PC-3 (cell line): ENCODE measurements at regions of chr14 and their contacts with region 1.

Region 1: GRCh38 chr14:51304941-51305340 is 64.9 kb downstream of the TMX1 start:
- DNase-seq: peak; percentile 95
- ATAC-seq: peak; percentile 97
- H3K4me3 ChIP-seq: no peak overlapping the region
- H3K27ac ChIP-seq: peak overlapping the region; percentile 42
- H3K4me1 ChIP-seq: peaks cover 31% of the 10 kb centered on the region
- H3K27me3 ChIP-seq: no peaks in the 10 kb centered on the region
- CTCF ChIP-seq: no peak

Region 2: DNA sequence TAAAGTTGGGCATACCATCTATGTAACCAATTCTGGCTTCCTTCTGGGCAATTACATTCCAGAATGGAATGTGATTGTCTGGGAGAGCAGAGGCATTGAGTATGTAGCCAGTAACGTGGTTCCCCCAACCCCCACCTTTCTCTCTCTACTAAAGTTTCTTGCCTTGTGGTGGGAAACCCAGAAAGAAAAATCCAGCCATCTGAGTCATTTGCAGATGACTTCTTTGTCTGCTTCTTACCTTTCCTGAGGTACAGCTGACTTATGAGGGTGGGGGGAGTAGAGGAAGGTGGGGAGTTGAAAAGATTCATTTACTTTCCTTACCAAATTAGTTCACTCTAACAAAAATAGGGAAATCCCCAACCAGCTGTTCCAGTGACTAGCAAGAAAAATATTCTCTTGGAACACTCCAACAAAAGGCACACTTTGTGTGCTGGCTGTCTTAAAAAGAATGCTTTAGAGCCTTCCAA is 234.7 kb after region 1 on chr14:
- CTCF ChIA-PET with region 1: no interaction called
- POLR2A ChIA-PET with region 1: no interaction called
- intact Hi-C with region 1: loop called (anchors 5 kb)
- DNase-seq: peak; percentile 99
- ATAC-seq: peak; percentile 60
- H3K4me3 ChIP-seq: peak overlapping the region; percentile 22; the same call in 1 of the 2 replicates
- H3K27ac ChIP-seq: peak overlapping the region; percentile 96
- H3K4me1 ChIP-seq: peaks cover 50% of the 10 kb centered on the region
- H3K27me3 ChIP-seq: no peaks in the 10 kb centered on the region
- CTCF ChIP-seq: no peak